Gastrocnemius medialis (tissue), 4 donors: ENCODE measurements at regions of chr11 and their contacts with region 1.

Region 1: DNA sequence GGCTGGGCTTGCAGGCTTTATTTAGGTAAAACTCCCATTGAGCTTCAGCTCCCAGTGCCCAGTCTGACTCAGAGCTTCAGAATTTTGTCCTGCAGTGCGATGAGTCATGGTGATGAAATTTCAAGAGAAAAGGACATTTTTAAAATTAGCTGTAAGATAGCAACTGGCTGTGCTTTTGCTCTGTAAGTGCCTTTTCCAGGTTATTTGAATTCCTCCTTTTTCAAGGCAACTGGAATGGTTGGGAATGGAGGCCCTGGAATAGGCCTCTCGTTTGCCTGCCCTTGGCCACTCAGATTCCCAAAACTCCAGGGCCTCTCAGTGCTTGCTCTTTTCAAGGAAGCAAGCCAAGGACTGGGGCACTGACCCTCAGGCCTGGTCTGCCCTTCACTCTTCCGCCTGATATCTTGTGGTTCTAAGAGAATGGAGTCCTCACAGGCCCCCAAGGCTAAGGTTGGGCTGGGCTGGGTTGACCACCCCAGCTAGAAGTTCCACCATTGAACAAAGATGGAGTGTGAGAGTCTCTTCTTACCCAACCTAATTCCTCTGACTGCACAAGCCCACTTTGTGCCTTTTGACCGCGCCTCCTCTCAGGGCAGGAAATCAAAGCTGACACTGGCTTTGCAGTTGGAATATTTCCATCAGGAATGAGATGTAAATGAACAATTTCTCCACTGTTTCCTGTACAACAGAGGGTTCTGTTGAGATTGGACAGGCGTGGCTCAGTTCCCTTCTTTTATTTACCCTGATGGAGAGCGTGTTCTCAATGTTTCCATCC is 59.4 kb upstream of the PRSS23 start:
- DNase-seq: peak; percentile 24 to 54
- ATAC-seq: peak; percentile 51 to 59
- H3K4me3 ChIP-seq: no peak overlapping the region
- H3K27ac ChIP-seq: peak overlapping the region; percentile 64 to 75 (median 70)
- H3K4me1 ChIP-seq: peaks cover 18 to 30% of the 10 kb centered on the region in 2 donors
- H3K27me3 ChIP-seq: no peaks in the 10 kb centered on the region
- CTCF ChIP-seq: no peak
- POLR2A ChIP-seq: no peak

Region 2: DNA sequence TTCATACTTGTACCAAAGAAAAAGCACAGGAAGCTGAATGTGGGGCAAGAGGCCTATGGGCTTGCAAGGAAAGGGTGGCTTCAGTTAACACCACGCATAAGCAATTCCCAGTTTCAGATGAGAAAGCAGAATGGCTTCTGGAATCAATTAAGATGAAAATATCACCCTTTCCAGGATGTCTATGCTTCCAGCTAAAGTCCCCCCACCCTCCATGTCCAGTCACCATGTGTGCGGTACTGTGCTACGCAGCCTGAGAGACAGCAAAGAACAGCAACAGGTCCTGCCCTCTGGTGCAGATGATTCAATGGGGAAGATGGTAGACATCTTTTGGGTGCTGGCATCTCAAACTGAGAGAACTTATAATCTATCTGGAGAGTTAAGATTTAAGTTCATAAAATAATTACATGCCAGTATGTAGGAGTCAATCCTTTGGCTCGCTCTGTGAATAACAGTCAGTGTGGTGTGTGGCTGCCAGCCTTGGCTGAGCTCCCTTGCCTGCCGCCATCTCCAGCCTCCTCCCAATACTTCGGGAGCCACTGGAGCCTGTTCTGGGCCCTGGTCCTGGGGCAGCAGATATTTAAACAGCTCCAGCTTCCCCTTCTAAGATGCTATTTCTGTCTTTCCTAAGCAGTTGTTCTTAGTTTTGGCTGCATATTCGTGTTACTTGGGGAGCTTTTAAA is 113.0 kb before region 1 on chr11:
- in situ Hi-C with region 1: no loop called
- intact Hi-C with region 1: loop called (anchors 5 kb)
- DNase-seq: no peak
- ATAC-seq: no peak
- H3K4me3 ChIP-seq: no peak overlapping the region
- H3K27ac ChIP-seq: peak overlapping the region; percentile 50 to 68 (median 63)
- H3K4me1 ChIP-seq: peaks cover 54 to 55% of the 10 kb centered on the region in 2 donors
- H3K27me3 ChIP-seq: no peaks in the 10 kb centered on the region
- CTCF ChIP-seq: no peak
- POLR2A ChIP-seq: no peak

Region 3: DNA sequence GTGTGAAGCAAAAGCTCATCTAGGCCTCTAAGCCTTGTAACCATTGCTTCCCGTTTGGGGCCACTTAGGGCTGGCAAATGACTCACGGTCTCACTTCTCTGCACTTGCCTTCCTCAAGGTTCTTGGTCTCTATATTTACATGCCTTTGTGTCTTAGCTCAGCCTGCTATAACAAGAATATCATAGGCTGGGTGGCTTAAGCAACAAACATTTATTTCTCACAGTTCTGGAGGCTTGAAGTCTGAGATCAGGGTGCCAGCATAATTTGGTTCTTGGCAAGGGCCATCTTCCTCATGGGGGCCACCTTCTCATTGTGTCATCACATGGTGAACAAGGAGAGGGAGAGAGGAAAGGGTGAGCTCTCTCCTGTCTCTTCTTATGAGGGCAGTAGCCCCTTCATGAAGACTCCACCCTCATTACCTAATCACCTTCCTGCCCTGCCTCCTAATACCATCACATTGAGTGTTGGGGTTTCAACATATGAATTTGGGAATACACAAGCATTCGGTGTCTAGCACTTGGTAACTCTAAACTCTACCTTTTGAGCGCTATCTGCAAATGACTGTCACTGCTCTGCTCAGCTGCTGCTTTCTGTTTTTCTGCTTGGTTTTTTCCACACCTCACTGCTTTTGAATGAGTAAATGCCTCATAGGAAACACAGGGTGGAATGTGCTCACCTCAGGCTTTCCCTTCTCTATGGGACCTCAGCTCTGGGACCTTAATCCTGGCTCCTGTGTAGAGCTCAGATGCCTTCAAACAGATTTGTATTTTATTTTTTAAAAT is 52.3 kb before region 1 on chr11:
- in situ Hi-C with region 1: no loop called
- intact Hi-C with region 1: loop called (anchors 5 kb)
- DNase-seq: peak; percentile 27 to 43
- ATAC-seq: peak; percentile 91 to 95
- H3K4me3 ChIP-seq: no peak overlapping the region
- H3K27ac ChIP-seq: peak overlapping the region; percentile 67 to 82 (median 76)
- H3K4me1 ChIP-seq: peaks cover 26 to 40% of the 10 kb centered on the region in 2 donors
- H3K27me3 ChIP-seq: no peaks in the 10 kb centered on the region
- CTCF ChIP-seq: no peak
- POLR2A ChIP-seq: peak in 1 of 2 donors; percentile 23